ENCODE measurements at regions of chrX and their contacts with region 1.

Region 1: GRCh38 chrX:36116222-36116621 is 196.7 kb downstream of the CFAP47 start:
- DNase-seq: no peak
- ATAC-seq: no peak
- H3K4me3 ChIP-seq: no peak overlapping the region
- H3K27ac ChIP-seq: no peak overlapping the region
- H3K4me1 ChIP-seq: no peaks in the 10 kb centered on the region
- H3K27me3 ChIP-seq: no peaks in the 10 kb centered on the region
- CTCF ChIP-seq: no peak
- POLR2A ChIP-seq: no peak
- RAD21 ChIP-seq: no peak

Region 2: DNA sequence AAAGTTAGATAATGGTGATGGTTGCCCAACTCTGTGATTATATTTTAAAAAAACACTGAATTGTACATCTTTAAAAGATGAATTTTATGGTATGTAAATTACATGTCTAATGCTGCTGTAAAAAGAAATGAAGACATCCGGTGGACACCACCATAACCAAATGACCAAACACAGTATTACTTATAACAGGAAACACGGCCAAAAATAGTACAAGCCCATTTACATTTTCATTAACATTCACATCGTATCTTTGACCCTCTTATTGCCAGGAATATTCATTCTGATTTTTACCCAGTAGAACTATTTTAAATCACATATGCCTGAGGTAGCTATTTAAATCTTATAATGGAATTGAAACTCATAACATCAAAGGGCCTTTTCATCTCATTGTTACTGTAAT is 53.4 kb before region 1 on chrX:
- CTCF ChIA-PET with region 1: no interaction called
- POLR2A ChIA-PET with region 1: no interaction called
- dilution Hi-C with region 1: no loop called
- in situ Hi-C with region 1: no loop called
- intact Hi-C with region 1: loop called (anchors 10 kb)
- DNase-seq: no peak
- ATAC-seq: no peak
- H3K4me3 ChIP-seq: no peak overlapping the region
- H3K27ac ChIP-seq: no peak overlapping the region
- H3K4me1 ChIP-seq: no peaks in the 10 kb centered on the region
- H3K27me3 ChIP-seq: no peaks in the 10 kb centered on the region
- CTCF ChIP-seq: no peak
- POLR2A ChIP-seq: no peak
- RAD21 ChIP-seq: no peak

Region 3: DNA sequence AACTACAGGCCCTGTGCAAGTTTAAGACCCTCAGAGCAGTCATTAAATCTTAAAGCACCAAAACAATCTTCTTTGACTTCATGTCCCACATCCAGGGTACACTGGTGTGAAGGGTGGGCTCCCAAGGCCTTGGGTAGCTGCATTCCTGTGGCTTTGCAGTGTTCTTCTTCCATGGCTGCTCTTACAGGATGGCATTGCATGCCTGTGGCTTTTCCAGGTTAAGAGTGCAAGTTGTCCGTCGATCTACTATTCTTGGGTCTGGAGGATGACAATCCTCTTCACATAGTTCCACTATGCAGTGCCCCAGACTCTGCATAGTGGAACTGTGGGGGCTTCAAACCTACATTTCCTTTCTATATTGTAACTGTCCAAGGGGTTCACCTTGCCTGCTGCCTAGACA is 297.8 kb after region 1 on chrX:
- CTCF ChIA-PET with region 1: no interaction called
- POLR2A ChIA-PET with region 1: no interaction called
- dilution Hi-C with region 1: no loop called
- in situ Hi-C with region 1: no loop called
- intact Hi-C with region 1: no loop called
- DNase-seq: no peak
- ATAC-seq: no peak
- H3K4me3 ChIP-seq: no peak overlapping the region
- H3K27ac ChIP-seq: no peak overlapping the region
- H3K4me1 ChIP-seq: no peaks in the 10 kb centered on the region
- H3K27me3 ChIP-seq: no peaks in the 10 kb centered on the region
- CTCF ChIP-seq: no peak
- POLR2A ChIP-seq: no peak
- RAD21 ChIP-seq: no peak